ENCODE measurements at regions of chr12 and their contacts with region 1.

Region 1: GRCh38 chr12:5745265-5745888 is 199.7 kb downstream of the ANO2 start:
- DNase-seq: peak; percentile 56 to 74
- ATAC-seq: peak; percentile 87 to 92 (median 90)
- H3K4me3 ChIP-seq: no peak overlapping the region
- H3K27ac ChIP-seq: peak overlapping the region in 5 of 10 donors; percentile 27 to 66 (median 34)
- H3K4me1 ChIP-seq: peaks cover 0 to 30% (median 6%) of the 10 kb centered on the region in 9 donors
- H3K27me3 ChIP-seq: no peaks in the 10 kb centered on the region
- CTCF ChIP-seq: peak; percentile 70 to 89 (median 86)

Region 2: DNA sequence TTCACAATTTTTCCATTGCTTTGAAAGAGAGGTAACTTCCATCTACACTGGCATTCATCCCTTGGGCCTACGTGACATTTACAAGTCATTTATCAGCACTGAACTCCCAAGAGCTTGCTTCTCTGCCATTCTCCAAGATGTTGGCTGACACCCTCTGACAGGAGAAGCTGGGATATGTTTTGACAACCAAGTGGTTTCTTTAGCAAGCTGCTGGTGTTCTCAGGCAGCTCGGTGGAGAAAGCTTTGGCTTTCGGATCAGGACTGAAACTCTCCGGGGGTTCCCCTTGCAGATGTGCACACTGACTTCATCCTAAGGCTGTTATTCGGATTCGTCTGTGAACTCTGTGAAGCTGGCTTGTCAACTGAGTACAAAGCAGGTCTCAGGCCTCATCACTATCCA is 686.0 kb before region 1 on chr12:
- intact Hi-C with region 1: no loop called
- DNase-seq: no peak
- ATAC-seq: peak; percentile 29 to 81 (median 61)
- H3K4me3 ChIP-seq: no peak overlapping the region
- H3K27ac ChIP-seq: peak overlapping the region in 6 of 10 donors; percentile 5 to 48 (median 14)
- H3K4me1 ChIP-seq: peaks cover 5 to 29% (median 18%) of the 10 kb centered on the region in 9 donors
- H3K27me3 ChIP-seq: no peaks in the 10 kb centered on the region
- CTCF ChIP-seq: no peak

Region 3: DNA sequence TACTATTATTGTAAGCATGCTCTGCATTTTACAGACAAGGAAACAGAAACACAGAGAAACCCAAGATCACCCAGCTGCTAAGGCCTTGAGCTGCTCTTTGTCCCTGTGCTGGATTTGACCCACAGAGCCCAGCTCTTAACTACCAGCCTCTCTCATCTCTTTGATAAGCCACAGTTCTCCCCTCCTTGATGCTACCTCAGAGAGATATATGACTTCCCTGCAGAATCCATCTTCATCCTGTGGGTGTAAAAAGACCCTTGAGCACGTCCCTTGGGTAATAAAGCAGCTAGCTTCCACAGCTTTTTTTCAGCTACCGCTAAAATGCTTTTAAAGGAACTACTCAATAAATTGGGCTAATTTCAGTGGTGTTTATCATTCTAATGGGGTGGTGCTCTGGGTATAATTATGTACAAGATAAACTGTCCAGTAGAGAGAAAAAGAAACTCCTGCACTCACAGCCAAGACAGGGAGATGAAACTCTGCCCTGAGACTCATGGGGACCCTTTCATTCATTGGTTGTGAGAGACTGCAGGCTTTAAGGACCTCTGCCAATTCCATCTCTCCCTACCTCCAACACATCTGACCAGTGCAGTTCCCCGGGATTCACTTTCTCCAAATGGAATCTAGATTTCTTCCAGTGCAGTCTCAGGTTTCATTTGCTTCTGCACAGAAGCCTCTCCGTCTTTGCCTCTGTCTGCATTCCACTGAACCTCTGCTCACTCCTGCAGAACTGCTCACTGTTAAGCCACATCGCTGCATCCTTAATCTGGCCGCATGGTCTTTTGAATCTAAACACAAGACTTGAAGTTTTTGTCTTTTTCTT is 338.1 kb before region 1 on chr12:
- intact Hi-C with region 1: no loop called
- DNase-seq: no peak
- ATAC-seq: no peak
- H3K4me3 ChIP-seq: no peak overlapping the region
- H3K27ac ChIP-seq: no peak overlapping the region
- H3K4me1 ChIP-seq: peaks cover 0 to 5% (median 0%) of the 10 kb centered on the region in 9 donors
- H3K27me3 ChIP-seq: peaks cover 0 to 32% (median 3%) of the 10 kb centered on the region in 7 donors
- CTCF ChIP-seq: no peak

Region 4: DNA sequence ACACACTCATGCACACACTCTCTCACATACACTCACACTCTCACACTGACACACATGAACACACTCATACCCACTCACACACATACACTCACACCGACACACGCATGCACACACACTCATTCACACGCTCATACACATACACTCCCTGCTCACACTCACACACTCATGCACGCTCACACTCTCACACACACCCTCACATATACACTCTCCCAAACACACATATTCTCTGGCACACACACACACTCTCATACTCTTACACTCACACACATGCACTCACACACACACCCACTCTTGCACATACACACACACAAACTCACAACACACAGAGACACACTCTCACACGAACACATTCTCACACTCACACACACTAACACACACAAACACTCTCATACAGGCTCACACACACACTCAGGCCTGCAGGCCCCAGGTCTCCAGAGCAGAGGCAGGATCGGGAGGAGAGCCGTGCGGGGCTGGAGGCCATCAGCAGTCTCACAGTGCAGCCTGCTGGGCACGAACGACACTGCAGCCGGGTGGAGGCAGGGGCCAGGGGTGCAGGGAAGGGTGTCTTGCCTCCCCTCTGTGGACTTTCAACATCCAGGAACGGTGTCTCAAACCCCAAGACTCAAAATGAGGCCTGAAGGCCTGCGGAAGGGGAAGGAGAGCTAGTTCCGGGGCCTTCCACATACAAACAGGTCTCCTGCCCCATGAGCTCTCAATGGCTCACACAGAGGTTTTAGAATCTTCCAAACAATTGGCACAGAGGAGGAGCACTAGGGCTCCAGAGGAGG is 51.0 kb after region 1 on chr12:
- intact Hi-C with region 1: loop called in 3 of 10 experiments (anchors 5 to 10 kb)
- DNase-seq: peak in 1 of 2 donors; percentile 43
- ATAC-seq: peak; percentile 38 to 75 (median 66)
- H3K4me3 ChIP-seq: no peak overlapping the region
- H3K27ac ChIP-seq: no peak overlapping the region
- H3K4me1 ChIP-seq: peaks cover 0 to 4% (median 0%) of the 10 kb centered on the region in 9 donors
- H3K27me3 ChIP-seq: no peaks in the 10 kb centered on the region
- CTCF ChIP-seq: peak in 8 of 9 donors; percentile 52 to 69 (median 62)

Region 5: GRCh38 chr12:5872735-5873134 is 127.4 kb after region 1 on chr12:
- intact Hi-C with region 1: loop called in 1 of 10 experiments (anchors 5 kb)
- DNase-seq: no peak
- ATAC-seq: no peak
- H3K4me3 ChIP-seq: no peak overlapping the region
- H3K27ac ChIP-seq: no peak overlapping the region
- H3K4me1 ChIP-seq: peaks cover 0 to 21% (median 9%) of the 10 kb centered on the region in 9 donors
- H3K27me3 ChIP-seq: peaks cover 0 to 2% (median 0%) of the 10 kb centered on the region in 7 donors
- CTCF ChIP-seq: peak in 6 of 9 donors; percentile 11 to 31 (median 17)